Activated CD4-positive, alpha-beta memory T cell treated with anti-CD3 and anti-CD28 coated beads for 36 hours (primary cell): ENCODE measurements at regions of chr19 and their contacts with region 1.

Region 1: GRCh38 chr19:24069905-24070657 is 16.9 kb upstream of the ZNF254 start:
- DNase-seq: no peak
- H3K4me3 Mint-ChIP-seq: no peak overlapping the region
- H3K27ac Mint-ChIP-seq: no peak overlapping the region
- H3K4me1 Mint-ChIP-seq: peaks cover 15% of the 10 kb centered on the region
- H3K27me3 Mint-ChIP-seq: no peaks in the 10 kb centered on the region

Region 2: DNA sequence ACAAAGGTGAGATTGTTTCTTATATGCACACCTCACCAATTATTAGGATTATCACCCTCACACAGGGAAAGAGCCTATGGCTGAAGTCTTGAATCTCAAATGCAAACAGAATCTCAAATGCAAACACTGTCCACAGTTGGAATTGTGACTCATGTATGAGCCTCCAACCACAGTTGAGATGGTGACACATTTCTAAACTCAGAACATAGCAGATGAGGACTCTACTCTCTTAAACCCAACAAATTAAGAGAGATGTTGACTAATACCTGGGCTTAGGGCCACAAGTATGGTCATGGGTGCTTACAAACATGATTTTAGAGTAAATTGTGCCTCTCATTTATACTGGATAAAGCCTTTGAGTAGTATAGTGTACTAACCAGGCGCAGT is 15.5 kb before region 1 on chr19:
- CTCF ChIA-PET with region 1: no interaction called
- POLR2A ChIA-PET with region 1: no interaction called
- intact Hi-C with region 1: loop called (anchors 2 kb)
- DNase-seq: peak; percentile 28
- H3K4me3 Mint-ChIP-seq: no peak overlapping the region
- H3K27ac Mint-ChIP-seq: peak overlapping the region; percentile 75
- H3K4me1 Mint-ChIP-seq: peaks cover 19% of the 10 kb centered on the region
- H3K27me3 Mint-ChIP-seq: no peaks in the 10 kb centered on the region